ENCODE measurements at regions of chr1 and their contacts with region 1.

Region 1: DNA sequence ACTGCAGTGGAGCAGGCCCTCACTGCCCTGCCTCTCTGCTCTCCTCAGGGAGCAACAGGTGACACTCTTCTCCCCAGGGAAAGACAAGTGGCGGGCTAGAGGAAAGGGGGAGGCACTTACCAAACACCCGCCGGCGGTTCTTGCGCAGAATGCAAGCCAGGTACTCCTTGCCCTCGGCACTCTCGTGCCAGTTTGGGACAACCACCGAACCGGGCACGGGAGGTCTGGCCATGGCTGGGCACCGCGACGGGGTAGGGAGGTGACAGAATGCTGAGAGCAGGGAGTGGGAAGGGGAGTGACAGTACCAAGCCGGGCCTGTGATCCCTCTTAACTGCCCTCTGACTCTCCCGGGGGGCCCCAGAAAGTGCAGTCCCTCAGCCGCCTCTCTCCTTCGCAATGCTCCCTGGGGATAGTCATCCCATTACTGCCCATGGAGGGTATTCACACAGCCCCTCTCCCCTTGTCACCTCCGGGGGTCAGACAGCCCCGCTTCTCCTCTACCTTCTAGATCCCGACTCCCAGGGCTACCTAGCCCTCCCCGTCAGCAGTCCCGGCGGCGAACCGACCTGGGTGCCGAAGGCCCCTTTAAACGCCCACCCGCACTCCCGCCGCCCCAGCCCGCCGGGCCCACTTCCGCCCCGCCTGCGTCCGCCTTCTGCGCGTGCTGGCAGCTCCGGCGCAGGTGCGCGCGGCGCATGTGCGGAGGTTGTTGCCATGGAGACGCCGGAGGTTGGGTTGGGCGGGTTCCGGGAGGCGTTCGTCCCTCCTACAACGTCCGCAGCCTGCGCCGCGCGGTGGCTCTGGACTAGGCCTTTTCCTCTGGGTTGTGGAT is at the start of gene CPLANE2:
- DNase-seq: peak; percentile 98
- ATAC-seq: peak; percentile 94
- total RNA-seq, gene CPLANE2: 11.8 TPM

Region 2: DNA sequence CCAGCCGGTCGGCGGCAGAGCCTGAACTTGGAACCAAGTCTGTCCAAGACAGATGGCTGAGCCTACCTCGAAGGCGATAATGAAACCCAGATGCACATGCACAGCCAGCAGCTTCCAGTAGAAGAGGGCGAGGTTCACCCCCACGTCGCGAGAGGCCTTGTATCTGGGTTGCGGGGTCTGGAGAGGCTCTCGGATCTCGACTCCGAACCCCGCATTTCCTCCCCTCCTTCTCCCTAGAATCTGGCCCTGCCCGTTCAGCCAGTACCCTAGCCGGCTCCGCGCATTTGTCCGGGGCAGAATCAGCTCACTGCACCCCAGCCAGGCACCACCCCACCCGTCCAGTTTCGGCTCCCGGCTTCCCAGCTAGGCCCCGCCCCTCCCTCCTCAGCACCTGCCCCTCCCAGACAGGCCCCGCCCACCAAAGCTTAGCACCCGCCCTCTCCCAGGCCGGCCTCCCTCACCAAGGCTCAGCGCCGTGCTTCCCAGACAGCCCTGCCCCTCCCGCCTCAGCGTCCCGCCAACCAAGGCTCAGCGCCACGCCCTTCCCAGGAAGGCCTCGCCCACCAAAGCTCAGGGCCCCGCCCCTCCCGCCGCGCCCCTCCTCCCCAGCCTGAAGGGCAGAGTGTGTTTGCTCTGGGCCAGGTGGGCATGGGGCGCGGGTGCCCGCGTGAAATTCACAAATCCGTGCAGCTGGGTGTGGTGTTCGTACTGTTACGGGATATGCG is 19.5 kb before region 1 on chr1:
- intact Hi-C with region 1: loop called (anchors 2 kb)
- DNase-seq: peak; percentile 100
- ATAC-seq: peak; percentile 99

Region 3: GRCh38 chr1:16326833-16327404 is 90.2 kb after region 1 on chr1:
- intact Hi-C with region 1: no loop called
- DNase-seq: no peak
- ATAC-seq: no peak

Measured in Right ventricle myocardium inferior (tissue), 1 donor.